Heart left ventricle (tissue), 16 donors: ENCODE measurements at regions of chr13 and their contacts with region 1.

Region 1: GRCh38 chr13:37495046-37495445 is 103.5 kb downstream of the POSTN start:
- DNase-seq: no peak
- ATAC-seq: peak in 2 of 4 donors; percentile 59 to 71
- H3K4me3 ChIP-seq: no peak overlapping the region
- H3K27ac ChIP-seq: no peak overlapping the region
- H3K4me1 ChIP-seq: peaks cover 0 to 16% (median 1%) of the 10 kb centered on the region in 12 donors
- H3K27me3 ChIP-seq: no peaks in the 10 kb centered on the region
- CTCF ChIP-seq: no peak
- POLR2A ChIP-seq: no peak

Region 2: GRCh38 chr13:37194428-37194861 is 300.6 kb before region 1 on chr13:
- intact Hi-C with region 1: no loop called
- DNase-seq: no peak
- ATAC-seq: no peak
- H3K4me3 ChIP-seq: no peak overlapping the region
- H3K27ac ChIP-seq: no peak overlapping the region
- H3K4me1 ChIP-seq: peaks cover 0 to 3% (median 0%) of the 10 kb centered on the region in 12 donors
- H3K27me3 ChIP-seq: no peaks in the 10 kb centered on the region
- CTCF ChIP-seq: no peak
- POLR2A ChIP-seq: no peak

Region 3: GRCh38 chr13:37403776-37404528 is 91.1 kb before region 1 on chr13:
- intact Hi-C with region 1: no loop called
- DNase-seq: no peak
- ATAC-seq: no peak
- H3K4me3 ChIP-seq: no peak overlapping the region
- H3K27ac ChIP-seq: no peak overlapping the region
- H3K4me1 ChIP-seq: no peaks in the 10 kb centered on the region
- H3K27me3 ChIP-seq: no peaks in the 10 kb centered on the region
- CTCF ChIP-seq: no peak
- POLR2A ChIP-seq: no peak

Region 4: DNA sequence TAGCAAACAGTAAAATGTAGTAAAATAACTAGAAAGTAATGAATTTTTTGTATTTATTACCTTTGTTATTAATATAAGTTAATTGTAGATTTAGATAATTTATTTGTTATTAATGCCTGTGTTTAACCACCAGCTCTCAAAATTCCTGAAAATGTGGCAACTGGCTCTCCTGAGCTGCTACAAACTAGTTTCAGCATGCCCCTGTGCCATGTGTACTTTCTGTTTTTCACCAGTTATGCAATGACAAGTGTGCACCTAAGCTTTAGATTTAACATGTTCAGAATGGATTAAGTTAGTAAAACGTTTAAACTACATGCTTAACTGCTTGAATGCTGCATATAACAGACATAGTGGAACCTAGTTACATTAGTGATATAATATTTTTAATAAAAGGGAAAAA is 15.4 kb after region 1 on chr13:
- intact Hi-C with region 1: loop called in 5 of 10 experiments (anchors 1 to 2 kb)
- DNase-seq: no peak
- ATAC-seq: no peak
- H3K4me3 ChIP-seq: no peak overlapping the region
- H3K27ac ChIP-seq: no peak overlapping the region
- H3K4me1 ChIP-seq: no peaks in the 10 kb centered on the region
- H3K27me3 ChIP-seq: no peaks in the 10 kb centered on the region
- CTCF ChIP-seq: no peak
- POLR2A ChIP-seq: no peak

Region 5: GRCh38 chr13:37546087-37546486 is 51.0 kb after region 1 on chr13:
- intact Hi-C with region 1: no loop called
- DNase-seq: no peak
- ATAC-seq: no peak
- H3K4me3 ChIP-seq: no peak overlapping the region
- H3K27ac ChIP-seq: no peak overlapping the region
- H3K4me1 ChIP-seq: no peaks in the 10 kb centered on the region
- H3K27me3 ChIP-seq: no peaks in the 10 kb centered on the region
- CTCF ChIP-seq: no peak
- POLR2A ChIP-seq: no peak